Naive thymus-derived CD4-positive, alpha-beta T cell (primary cell): ENCODE measurements at regions of chr12 and their contacts with region 1.

Region 1: DNA sequence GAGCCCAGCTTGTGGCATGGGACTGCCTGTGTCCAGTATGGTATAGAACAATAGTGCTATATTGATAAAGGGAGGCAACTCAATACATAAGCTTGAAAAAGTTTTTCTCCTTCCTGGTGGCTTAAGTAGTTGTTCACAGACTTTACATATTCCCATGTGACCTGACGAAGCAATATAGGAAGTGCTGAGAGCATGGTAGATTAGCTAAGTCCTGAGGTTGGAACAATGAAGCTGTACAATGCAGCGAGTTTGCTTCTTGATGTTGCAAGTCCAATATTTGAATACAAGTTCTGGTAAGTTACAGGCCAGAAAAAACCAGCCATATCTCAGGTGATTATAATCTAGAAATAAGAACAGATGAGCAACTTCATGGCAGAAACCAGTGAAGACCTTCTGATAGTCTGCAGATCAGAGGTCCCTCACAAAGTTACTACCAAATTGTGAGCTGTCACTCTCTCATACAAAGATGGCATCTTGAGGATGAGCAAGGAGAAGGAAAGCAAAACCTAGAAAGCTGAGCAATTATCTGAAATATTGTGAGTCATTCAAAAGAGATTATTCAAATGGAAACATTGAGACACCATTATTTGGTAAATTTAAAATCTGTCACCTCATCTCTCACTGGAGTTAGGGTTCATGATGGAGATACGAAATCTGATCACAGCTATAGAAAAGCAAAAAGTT is 72.9 kb upstream of the BTG1 start:
- DNase-seq: no peak
- ATAC-seq: peak; percentile 54
- H3K4me3 ChIP-seq: no peak overlapping the region
- H3K4me3 Mint-ChIP-seq: peak overlapping the region in 2 of 10 donors; percentile 16 to 38
- H3K27ac ChIP-seq: no peak overlapping the region
- H3K27ac Mint-ChIP-seq: peak overlapping the region in 3 of 9 donors; percentile 29 to 36 (median 33)
- H3K4me1 ChIP-seq: peaks cover 0 to 9% of the 10 kb centered on the region in 2 donors
- H3K4me1 Mint-ChIP-seq: peaks cover 15 to 44% (median 30%) of the 10 kb centered on the region in 7 donors
- H3K27me3 ChIP-seq: no peaks in the 10 kb centered on the region
- H3K27me3 Mint-ChIP-seq: no peaks in the 10 kb centered on the region

Region 2: DNA sequence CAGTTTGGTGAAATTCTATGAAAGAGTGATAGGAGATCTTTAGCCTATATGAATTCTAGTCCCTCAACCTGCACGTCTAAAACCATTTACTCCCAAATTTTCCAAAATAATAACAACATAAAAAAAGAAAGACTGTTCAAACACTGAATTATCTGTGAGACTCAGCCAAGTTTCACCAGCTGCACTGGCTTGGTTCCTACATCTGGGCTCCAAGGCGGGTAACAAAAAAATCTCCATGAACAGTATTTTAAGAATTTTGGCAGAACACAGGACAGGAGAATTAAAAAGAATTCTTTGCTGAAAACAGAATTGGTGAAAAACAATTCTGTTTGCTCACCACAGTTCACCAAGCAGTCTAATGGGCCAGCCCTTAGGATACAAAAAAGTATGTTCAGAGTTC is 1973.1 kb before region 1 on chr12:
- CTCF ChIA-PET with region 1: no interaction called
- POLR2A ChIA-PET with region 1: no interaction called
- intact Hi-C with region 1: no loop called
- DNase-seq: no peak
- ATAC-seq: no peak
- H3K4me3 ChIP-seq: no peak overlapping the region
- H3K4me3 Mint-ChIP-seq: no peak overlapping the region
- H3K27ac ChIP-seq: no peak overlapping the region
- H3K27ac Mint-ChIP-seq: no peak overlapping the region
- H3K4me1 ChIP-seq: no peaks in the 10 kb centered on the region
- H3K4me1 Mint-ChIP-seq: no peaks in the 10 kb centered on the region
- H3K27me3 ChIP-seq: no peaks in the 10 kb centered on the region
- H3K27me3 Mint-ChIP-seq: peaks cover 0 to 19% (median 12%) of the 10 kb centered on the region in 5 donors

Region 3: DNA sequence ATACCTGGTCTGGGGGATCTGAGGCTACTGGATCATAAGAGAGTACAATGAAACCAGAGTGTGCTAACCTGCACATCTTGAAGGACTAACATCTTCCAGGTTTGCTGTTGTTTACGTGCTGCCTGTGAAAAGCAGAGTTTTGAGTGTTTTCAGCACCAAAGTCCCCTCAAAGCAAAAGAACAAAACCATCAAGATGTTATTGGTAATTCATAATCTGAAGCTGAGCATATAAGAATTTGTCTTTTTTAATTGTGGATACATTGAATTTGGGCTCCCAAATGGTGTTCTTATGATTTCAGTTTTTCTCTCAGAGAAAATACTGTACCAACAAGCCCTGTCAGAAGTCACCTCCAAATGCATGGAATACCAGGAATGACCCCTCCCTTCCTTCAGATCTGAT is 183.1 kb before region 1 on chr12:
- CTCF ChIA-PET with region 1: no interaction called
- POLR2A ChIA-PET with region 1: no interaction called
- intact Hi-C with region 1: no loop called
- DNase-seq: no peak
- ATAC-seq: no peak
- H3K4me3 ChIP-seq: peak overlapping the region; percentile 52
- H3K4me3 Mint-ChIP-seq: peak overlapping the region; percentile 84 to 99 (median 91)
- H3K27ac ChIP-seq: peak overlapping the region; percentile 76
- H3K27ac Mint-ChIP-seq: peak overlapping the region; percentile 95 to 100 (median 99)
- H3K4me1 ChIP-seq: peaks cover 65 to 79% of the 10 kb centered on the region in 2 donors
- H3K4me1 Mint-ChIP-seq: peaks cover 49 to 100% (median 94%) of the 10 kb centered on the region in 7 donors
- H3K27me3 ChIP-seq: no peaks in the 10 kb centered on the region
- H3K27me3 Mint-ChIP-seq: no peaks in the 10 kb centered on the region

Region 4: GRCh38 chr12:92234533-92234932 is 16.0 kb after region 1 on chr12:
- CTCF ChIA-PET with region 1: no interaction called
- POLR2A ChIA-PET with region 1: interaction called, 5 read pairs
- intact Hi-C with region 1: loop called in 1 of 2 experiments (anchors 2 kb)
- DNase-seq: peak in 6 of 9 donors; percentile 19 to 60 (median 42)
- ATAC-seq: peak; percentile 52
- H3K4me3 ChIP-seq: no peak overlapping the region
- H3K4me3 Mint-ChIP-seq: peak overlapping the region in 9 of 10 donors; percentile 13 to 78 (median 65)
- H3K27ac ChIP-seq: no peak overlapping the region
- H3K27ac Mint-ChIP-seq: peak overlapping the region in 8 of 9 donors; percentile 51 to 92 (median 84)
- H3K4me1 ChIP-seq: peaks cover 0 to 22% of the 10 kb centered on the region in 2 donors
- H3K4me1 Mint-ChIP-seq: peaks cover 6 to 48% (median 38%) of the 10 kb centered on the region in 7 donors
- H3K27me3 ChIP-seq: no peaks in the 10 kb centered on the region
- H3K27me3 Mint-ChIP-seq: no peaks in the 10 kb centered on the region

Region 5: DNA sequence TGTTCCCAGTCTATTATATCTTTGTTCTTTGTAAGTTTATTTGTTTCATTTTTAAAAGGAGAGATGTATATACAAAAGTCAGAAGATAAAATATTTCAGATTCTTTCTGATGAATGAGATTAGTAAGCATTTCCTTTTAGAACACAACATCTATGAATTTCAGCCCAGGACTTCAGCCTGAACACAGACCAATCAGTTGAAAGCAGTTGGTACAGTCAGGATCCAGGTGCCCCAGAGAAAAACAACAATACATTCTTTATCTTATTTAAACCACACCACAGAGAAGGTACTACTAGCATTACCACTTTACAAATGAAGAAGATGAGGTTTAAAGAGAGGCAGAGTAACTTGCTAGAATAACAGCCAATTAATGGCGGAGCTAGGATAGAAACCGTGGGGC is 41.3 kb after region 1 on chr12:
- CTCF ChIA-PET with region 1: no interaction called
- POLR2A ChIA-PET with region 1: no interaction called
- intact Hi-C with region 1: loop called in 1 of 2 experiments (anchors 5 kb)
- DNase-seq: peak in 1 of 9 donors; percentile 8
- ATAC-seq: no peak
- H3K4me3 ChIP-seq: no peak overlapping the region
- H3K4me3 Mint-ChIP-seq: peak overlapping the region in 9 of 10 donors; percentile 2 to 77 (median 53)
- H3K27ac ChIP-seq: peak overlapping the region; percentile 37
- H3K27ac Mint-ChIP-seq: peak overlapping the region in 8 of 9 donors; percentile 33 to 91 (median 87)
- H3K4me1 ChIP-seq: peaks cover 0 to 13% of the 10 kb centered on the region in 2 donors
- H3K4me1 Mint-ChIP-seq: peaks cover 16 to 60% (median 44%) of the 10 kb centered on the region in 7 donors
- H3K27me3 ChIP-seq: no peaks in the 10 kb centered on the region
- H3K27me3 Mint-ChIP-seq: no peaks in the 10 kb centered on the region